Sciatic nerve (tissue), 2 donors: ENCODE measurements at regions of chr3 and their contacts with region 1.

Region 1: GRCh38 chr3:99794485-99794884 is 23.2 kb upstream of the CMSS1 start:
- DNase-seq: no peak
- ATAC-seq: no peak

Region 2: GRCh38 chr3:99023590-99024192 is 770.8 kb before region 1 on chr3:
- intact Hi-C with region 1: loop called (anchors 5 kb)
- DNase-seq: no peak
- ATAC-seq: no peak

Region 3: GRCh38 chr3:100245927-100246326 is 451.4 kb after region 1 on chr3:
- intact Hi-C with region 1: no loop called
- DNase-seq: no peak
- ATAC-seq: no peak

Region 4: DNA sequence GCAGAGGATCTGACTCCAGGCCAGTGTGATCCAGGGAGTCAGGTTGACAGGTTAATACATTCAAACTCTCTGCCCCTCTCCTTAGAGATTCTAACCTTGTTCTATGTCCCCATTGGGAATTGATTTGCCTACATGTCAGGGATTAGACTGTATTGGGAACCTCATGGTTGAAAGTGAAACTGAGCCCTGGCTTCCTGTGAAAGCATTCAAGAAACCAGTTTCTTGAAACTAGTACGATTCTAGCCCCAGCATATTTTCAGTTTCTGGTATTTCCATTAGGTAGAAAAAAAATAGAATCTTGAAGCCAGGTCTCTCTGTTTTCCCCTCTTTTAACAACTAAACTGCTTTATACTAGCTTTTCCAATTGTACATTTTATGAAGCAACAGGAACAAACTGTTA is 1339.2 kb after region 1 on chr3:
- intact Hi-C with region 1: no loop called
- DNase-seq: no peak
- ATAC-seq: no peak